GM12878 (cell line): ENCODE measurements at regions of chr2 and their contacts with region 1.

Region 1: DNA sequence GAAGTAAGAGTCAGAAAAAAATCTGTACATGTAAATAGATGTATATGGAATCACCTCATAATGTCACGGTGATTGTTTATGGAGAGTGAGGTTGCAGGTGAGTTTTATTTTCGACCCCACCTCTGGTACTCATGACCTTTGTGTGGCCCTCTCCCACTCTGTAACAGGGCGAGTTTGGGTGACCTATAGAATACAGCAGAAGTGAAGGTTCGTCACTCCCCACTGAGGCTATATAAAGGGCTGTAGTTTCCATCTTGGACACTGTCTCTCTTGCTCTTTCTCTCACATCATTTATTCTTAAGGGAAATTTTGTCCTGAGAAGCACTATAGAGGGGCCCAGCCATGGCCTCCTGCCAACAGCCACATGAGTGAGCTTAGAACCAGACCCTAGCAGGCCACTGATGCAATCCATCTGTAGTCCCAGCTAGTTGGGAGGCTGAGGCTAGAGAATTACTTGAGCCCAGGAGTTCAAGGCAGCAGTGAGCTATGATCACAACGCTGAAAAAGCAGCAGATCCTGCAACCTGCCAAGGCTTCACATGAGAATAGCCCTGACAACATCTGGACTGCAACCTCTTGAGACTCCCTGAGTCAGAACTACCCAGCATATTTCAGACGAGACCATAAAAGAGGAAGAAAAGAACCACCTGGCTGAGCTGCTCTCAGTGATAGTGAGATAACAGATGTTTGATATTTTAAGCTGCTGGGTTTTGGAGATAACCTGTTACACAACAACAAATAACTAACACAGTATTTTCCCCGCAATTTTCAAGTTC is 74.3 kb upstream of the SLC1A4 start:
- DNase-seq: peak; percentile 96
- ATAC-seq: peak; percentile 68
- H3K4me3 ChIP-seq: peak overlapping the region; percentile 41
- H3K27ac ChIP-seq: peak overlapping the region; percentile 81
- H3K4me1 ChIP-seq: peaks cover 62% of the 10 kb centered on the region
- H3K27me3 ChIP-seq: no peaks in the 10 kb centered on the region
- CTCF ChIP-seq: no peak
- EP300 ChIP-seq: peak; percentile 73 to 80; a peak in 3 of 4 replicates
- POLR2A ChIP-seq: peak; percentile 72
- RAD21 ChIP-seq: no peak

Region 2: GRCh38 chr2:64823738-64824137 is 91.2 kb before region 1 on chr2:
- CTCF ChIA-PET with region 1: no interaction called
- POLR2A ChIA-PET with region 1: no interaction called
- RAD21 ChIA-PET with region 1: no interaction called
- SMC1A ChIA-PET with region 1: no interaction called
- in situ Hi-C with region 1: no loop called
- intact Hi-C with region 1: no loop called
- DNase-seq: no peak
- ATAC-seq: no peak
- H3K4me3 ChIP-seq: no peak overlapping the region
- H3K27ac ChIP-seq: no peak overlapping the region
- H3K4me1 ChIP-seq: peaks cover 25% of the 10 kb centered on the region
- H3K27me3 ChIP-seq: no peaks in the 10 kb centered on the region
- CTCF ChIP-seq: no peak
- EP300 ChIP-seq: no peak
- POLR2A ChIP-seq: no peak
- RAD21 ChIP-seq: no peak

Region 3: DNA sequence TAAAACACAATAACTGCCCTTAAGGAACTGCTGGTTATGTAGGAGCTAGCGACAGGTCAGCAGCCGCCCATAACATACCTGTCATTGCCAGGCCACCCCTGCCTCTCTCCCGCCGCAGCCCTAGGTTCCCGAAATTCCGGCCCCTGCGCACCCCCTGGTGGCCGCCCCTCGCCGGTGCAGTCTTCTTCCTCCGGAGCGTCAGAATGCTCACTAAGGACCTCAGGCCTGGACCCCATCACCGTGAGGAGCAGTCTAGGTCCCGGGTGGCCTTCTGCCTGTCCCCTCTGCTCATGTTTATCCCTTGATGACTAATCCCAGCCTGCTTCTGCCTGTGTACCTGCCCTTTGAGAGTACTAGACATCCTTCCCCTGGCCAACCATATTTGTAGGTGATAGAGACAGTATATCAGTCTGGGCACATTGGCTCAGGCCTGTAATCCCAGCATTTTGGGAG is 41.4 kb before region 1 on chr2:
- CTCF ChIA-PET with region 1: interaction called, 6 read pairs
- POLR2A ChIA-PET with region 1: interaction called, 4 read pairs
- RAD21 ChIA-PET with region 1: interaction called, 16 read pairs
- SMC1A ChIA-PET with region 1: interaction called, 16 read pairs
- in situ Hi-C with region 1: no loop called
- intact Hi-C with region 1: loop called (anchors 2 kb)
- DNase-seq: no peak
- ATAC-seq: peak; percentile 98
- H3K4me3 ChIP-seq: peak overlapping the region; percentile 23; the same call in 1 of the 2 replicates
- H3K27ac ChIP-seq: no peak overlapping the region
- H3K4me1 ChIP-seq: peaks cover 9% of the 10 kb centered on the region
- H3K27me3 ChIP-seq: no peaks in the 10 kb centered on the region
- CTCF ChIP-seq: peak; percentile 94 to 99 (median 98)
- EP300 ChIP-seq: no peak
- POLR2A ChIP-seq: no peak
- RAD21 ChIP-seq: peak; percentile 89

Region 4: GRCh38 chr2:64945973-64946768 is 31.2 kb after region 1 on chr2:
- CTCF ChIA-PET with region 1: interaction called, 413 read pairs
- POLR2A ChIA-PET with region 1: interaction called, 377 read pairs
- RAD21 ChIA-PET with region 1: interaction called, 389 read pairs
- SMC1A ChIA-PET with region 1: interaction called, 395 read pairs
- in situ Hi-C with region 1: no loop called
- intact Hi-C with region 1: no loop called
- DNase-seq: peak; percentile 79
- ATAC-seq: peak; percentile 96
- H3K4me3 ChIP-seq: peak overlapping the region; percentile 35
- H3K27ac ChIP-seq: peak overlapping the region; percentile 91
- H3K4me1 ChIP-seq: peaks cover 48% of the 10 kb centered on the region
- H3K27me3 ChIP-seq: no peaks in the 10 kb centered on the region
- CTCF ChIP-seq: no peak
- EP300 ChIP-seq: peak; percentile 93 to 97
- POLR2A ChIP-seq: peak; percentile 96
- RAD21 ChIP-seq: peak; percentile 1; the same call in 1 of the 2 replicates

Region 5: GRCh38 chr2:64988420-64989125 is 73.7 kb after region 1 on chr2:
- CTCF ChIA-PET with region 1: interaction called, 8 read pairs
- POLR2A ChIA-PET with region 1: interaction called, 4 read pairs
- RAD21 ChIA-PET with region 1: interaction called, 40 read pairs
- SMC1A ChIA-PET with region 1: interaction called, 28 read pairs
- in situ Hi-C with region 1: no loop called
- intact Hi-C with region 1: loop called (anchors 1 kb)
- DNase-seq: no peak
- ATAC-seq: peak; percentile 46
- H3K4me3 ChIP-seq: peak overlapping the region; percentile 99
- H3K27ac ChIP-seq: peak overlapping the region; percentile 89
- H3K4me1 ChIP-seq: peaks cover 28% of the 10 kb centered on the region
- H3K27me3 ChIP-seq: no peaks in the 10 kb centered on the region
- CTCF ChIP-seq: peak; percentile 18 to 33 (median 20); a peak in 3 of 6 replicates
- EP300 ChIP-seq: peak; percentile 53 to 84; a peak in 3 of 4 replicates
- POLR2A ChIP-seq: peak; percentile 59
- RAD21 ChIP-seq: no peak

Region 6: GRCh38 chr2:65040400-65041261 is 125.7 kb after region 1 on chr2:
- CTCF ChIA-PET with region 1: interaction called, 119 read pairs
- POLR2A ChIA-PET with region 1: interaction called, 6 read pairs
- RAD21 ChIA-PET with region 1: interaction called, 95 read pairs
- SMC1A ChIA-PET with region 1: interaction called, 178 read pairs
- in situ Hi-C with region 1: loop called (anchors 5 kb)
- intact Hi-C with region 1: loop called (anchors 1 kb)
- DNase-seq: no peak
- ATAC-seq: peak; percentile 99
- H3K4me3 ChIP-seq: no peak overlapping the region
- H3K27ac ChIP-seq: no peak overlapping the region
- H3K4me1 ChIP-seq: peaks cover 2% of the 10 kb centered on the region; the same call in 1 of the 2 replicates
- H3K27me3 ChIP-seq: no peaks in the 10 kb centered on the region
- CTCF ChIP-seq: peak; percentile 93 to 96 (median 95)
- EP300 ChIP-seq: no peak
- POLR2A ChIP-seq: no peak
- RAD21 ChIP-seq: peak; percentile 83

Region 7: DNA sequence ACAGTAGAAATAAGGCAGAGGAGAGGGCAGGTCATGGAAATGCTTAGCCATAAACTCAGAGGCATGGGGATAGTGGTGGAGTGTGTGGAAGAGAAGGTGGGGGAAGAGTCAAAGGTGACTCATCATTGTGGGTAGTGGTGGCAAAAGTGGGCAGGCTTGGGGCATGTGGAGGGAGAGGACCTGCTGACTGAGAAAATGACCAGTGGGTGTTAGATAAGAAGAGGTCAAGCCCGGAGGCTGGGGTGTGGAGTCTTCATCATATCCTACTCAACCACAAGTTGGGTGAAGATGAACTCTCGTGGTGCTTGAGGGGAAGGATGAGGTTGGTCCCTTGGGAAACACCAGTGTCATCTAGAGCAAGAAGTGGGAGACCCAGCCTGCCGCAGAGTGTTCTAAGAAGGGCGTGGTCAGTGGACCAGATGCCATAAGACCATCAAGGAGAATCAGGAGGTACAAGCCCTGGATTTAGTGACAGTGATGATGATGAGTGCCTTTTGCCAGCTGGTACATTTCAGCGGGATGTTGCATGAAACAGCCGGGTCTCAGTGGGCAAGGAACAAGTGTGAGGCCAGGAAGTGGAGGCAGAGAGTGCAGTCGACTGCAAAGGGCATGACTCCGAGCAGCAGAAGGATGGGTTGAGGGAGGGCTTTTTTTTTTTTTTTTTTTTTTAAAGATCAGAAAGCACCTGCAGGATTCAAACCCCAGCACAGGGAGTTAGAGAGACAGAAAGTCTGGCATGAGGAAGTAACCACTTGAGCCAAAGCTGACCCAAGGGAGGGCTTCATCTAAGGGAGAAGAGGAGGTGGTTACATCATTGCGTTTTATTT is 640.1 kb after region 1 on chr2:
- CTCF ChIA-PET with region 1: no interaction called
- POLR2A ChIA-PET with region 1: no interaction called
- RAD21 ChIA-PET with region 1: no interaction called
- SMC1A ChIA-PET with region 1: no interaction called
- in situ Hi-C with region 1: loop called (anchors 25 kb)
- intact Hi-C with region 1: no loop called
- DNase-seq: peak; percentile 42
- ATAC-seq: peak; percentile 83
- H3K4me3 ChIP-seq: no peak overlapping the region
- H3K27ac ChIP-seq: no peak overlapping the region
- H3K4me1 ChIP-seq: peaks cover 14% of the 10 kb centered on the region
- H3K27me3 ChIP-seq: no peaks in the 10 kb centered on the region; a peak in 1 of 4 replicates
- CTCF ChIP-seq: no peak
- EP300 ChIP-seq: no peak
- POLR2A ChIP-seq: no peak
- RAD21 ChIP-seq: no peak